Mammary epithelial cell (primary cell): ENCODE measurements at regions of chr1 and their contacts with region 1.

Region 1: GRCh38 chr1:221886743-221887413 is 145.0 kb upstream of the DUSP10 start:
- DNase-seq: peak; percentile 100
- H3K4me3 ChIP-seq: no peak overlapping the region
- H3K27ac ChIP-seq: peak overlapping the region; percentile 93
- H3K4me1 ChIP-seq: peaks cover 46% of the 10 kb centered on the region
- H3K27me3 ChIP-seq: no peaks in the 10 kb centered on the region
- CTCF ChIP-seq: peak in 1 of 2 donors; percentile 49

Region 2: GRCh38 chr1:221543529-221544120 is 343.3 kb before region 1 on chr1:
- CTCF ChIA-PET with region 1: no interaction called
- dilution Hi-C with region 1: no loop called
- in situ Hi-C with region 1: no loop called
- intact Hi-C with region 1: loop called (anchors 5 kb)
- DNase-seq: peak; percentile 25
- H3K4me3 ChIP-seq: no peak overlapping the region
- H3K27ac ChIP-seq: no peak overlapping the region
- H3K4me1 ChIP-seq: peaks cover 13% of the 10 kb centered on the region
- H3K27me3 ChIP-seq: no peaks in the 10 kb centered on the region
- CTCF ChIP-seq: peak; percentile 37 to 68

Region 3: DNA sequence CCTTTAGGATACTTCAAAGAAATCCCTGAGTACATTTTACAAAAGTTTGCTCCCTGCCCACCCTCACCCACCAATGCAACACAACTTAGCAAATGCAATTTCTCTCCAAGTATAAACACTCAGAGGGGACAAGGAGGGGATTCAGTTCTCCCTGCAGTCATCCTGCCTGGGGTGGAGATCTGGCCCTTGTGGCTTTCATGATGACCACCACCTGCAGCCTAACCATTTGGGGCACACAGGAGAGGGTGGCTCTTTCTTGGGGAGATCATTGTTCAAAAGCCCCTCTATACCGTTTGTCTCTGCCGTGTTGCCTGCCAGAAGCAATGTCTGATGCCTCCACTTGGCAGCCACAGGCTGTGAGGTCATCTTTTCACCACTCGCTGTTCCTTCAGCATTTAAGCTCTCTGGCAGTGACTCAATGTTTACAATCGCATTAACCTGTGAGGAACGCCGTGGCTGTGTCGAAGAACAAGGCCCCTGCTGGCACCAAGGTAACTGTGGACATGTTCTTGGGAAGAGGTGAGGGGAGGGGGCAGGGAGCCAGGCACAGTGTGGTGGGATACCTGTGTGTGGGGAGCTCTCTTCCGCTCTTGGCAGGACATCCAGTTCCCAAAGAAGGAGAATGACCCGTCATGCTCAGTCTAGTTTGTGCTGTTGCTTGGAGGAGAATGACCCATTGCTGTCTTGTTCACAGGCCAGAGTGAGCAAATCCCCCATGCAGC is 41.1 kb before region 1 on chr1:
- CTCF ChIA-PET with region 1: no interaction called
- dilution Hi-C with region 1: loop called (anchors 5 kb)
- in situ Hi-C with region 1: no loop called
- intact Hi-C with region 1: loop called (anchors 2 kb)
- DNase-seq: peak; percentile 97
- H3K4me3 ChIP-seq: no peak overlapping the region
- H3K27ac ChIP-seq: peak overlapping the region; percentile 96
- H3K4me1 ChIP-seq: peaks cover 28% of the 10 kb centered on the region
- H3K27me3 ChIP-seq: no peaks in the 10 kb centered on the region
- CTCF ChIP-seq: peak in 1 of 2 donors; percentile 10

Region 4: GRCh38 chr1:221923929-221924598 is 37.2 kb after region 1 on chr1:
- CTCF ChIA-PET with region 1: no interaction called
- dilution Hi-C with region 1: no loop called
- in situ Hi-C with region 1: no loop called
- intact Hi-C with region 1: no loop called
- DNase-seq: no peak
- H3K4me3 ChIP-seq: no peak overlapping the region
- H3K27ac ChIP-seq: no peak overlapping the region
- H3K4me1 ChIP-seq: no peaks in the 10 kb centered on the region
- H3K27me3 ChIP-seq: no peaks in the 10 kb centered on the region
- CTCF ChIP-seq: no peak

Region 5: GRCh38 chr1:221945669-221946068 is 58.8 kb after region 1 on chr1:
- CTCF ChIA-PET with region 1: no interaction called
- dilution Hi-C with region 1: no loop called
- in situ Hi-C with region 1: no loop called
- intact Hi-C with region 1: loop called (anchors 5 kb)
- DNase-seq: no peak
- H3K4me3 ChIP-seq: no peak overlapping the region
- H3K27ac ChIP-seq: no peak overlapping the region
- H3K4me1 ChIP-seq: peaks cover 20% of the 10 kb centered on the region
- H3K27me3 ChIP-seq: no peaks in the 10 kb centered on the region
- CTCF ChIP-seq: no peak

Region 6: GRCh38 chr1:221994274-221994698 is 107.4 kb after region 1 on chr1:
- CTCF ChIA-PET with region 1: no interaction called
- dilution Hi-C with region 1: loop called (anchors 5 kb)
- in situ Hi-C with region 1: no loop called
- intact Hi-C with region 1: no loop called
- DNase-seq: peak; percentile 90
- H3K4me3 ChIP-seq: no peak overlapping the region
- H3K27ac ChIP-seq: peak overlapping the region; percentile 96
- H3K4me1 ChIP-seq: peaks cover 67% of the 10 kb centered on the region
- H3K27me3 ChIP-seq: no peaks in the 10 kb centered on the region
- CTCF ChIP-seq: no peak